ENCODE measurements at regions of chr3 and their contacts with region 1.

Region 1: DNA sequence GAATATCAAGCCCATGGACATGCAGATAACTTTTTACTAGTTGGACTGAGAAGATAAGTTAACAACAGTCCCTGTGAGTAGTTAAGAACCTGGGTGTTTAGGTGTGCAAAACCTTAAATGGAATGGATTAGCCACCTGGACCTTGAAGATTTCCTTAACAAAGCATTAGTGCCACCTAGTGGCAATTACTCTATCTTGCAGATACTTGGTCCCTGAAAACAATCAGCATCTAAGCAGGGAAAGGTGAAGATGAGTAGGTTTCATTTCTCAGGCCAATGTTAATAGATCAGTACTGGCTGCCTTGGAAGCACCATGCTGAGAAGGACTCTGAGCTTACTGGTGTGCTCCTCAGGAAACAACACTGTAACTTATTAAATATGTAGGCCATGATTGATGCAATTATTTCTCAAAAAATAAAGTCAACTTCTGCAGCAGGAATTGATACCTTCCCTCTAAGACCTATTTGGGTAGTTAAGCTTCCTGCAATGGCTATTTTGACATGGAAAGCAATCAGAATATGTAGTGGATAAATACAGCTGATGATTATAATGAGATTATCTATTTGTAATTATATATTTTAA is 329.4 kb downstream of the TBC1D5 start:
- H3K4me3 Mint-ChIP-seq: no peak overlapping the region
- H3K27ac Mint-ChIP-seq: no peak overlapping the region
- H3K4me1 Mint-ChIP-seq: no peaks in the 10 kb centered on the region
- H3K27me3 Mint-ChIP-seq: no peaks in the 10 kb centered on the region

Region 2: GRCh38 chr3:17258823-17259436 is 154.1 kb before region 1 on chr3:
- intact Hi-C with region 1: loop called (anchors 1 kb)
- H3K4me3 Mint-ChIP-seq: no peak overlapping the region
- H3K27ac Mint-ChIP-seq: no peak overlapping the region
- H3K4me1 Mint-ChIP-seq: no peaks in the 10 kb centered on the region
- H3K27me3 Mint-ChIP-seq: no peaks in the 10 kb centered on the region

Region 3: DNA sequence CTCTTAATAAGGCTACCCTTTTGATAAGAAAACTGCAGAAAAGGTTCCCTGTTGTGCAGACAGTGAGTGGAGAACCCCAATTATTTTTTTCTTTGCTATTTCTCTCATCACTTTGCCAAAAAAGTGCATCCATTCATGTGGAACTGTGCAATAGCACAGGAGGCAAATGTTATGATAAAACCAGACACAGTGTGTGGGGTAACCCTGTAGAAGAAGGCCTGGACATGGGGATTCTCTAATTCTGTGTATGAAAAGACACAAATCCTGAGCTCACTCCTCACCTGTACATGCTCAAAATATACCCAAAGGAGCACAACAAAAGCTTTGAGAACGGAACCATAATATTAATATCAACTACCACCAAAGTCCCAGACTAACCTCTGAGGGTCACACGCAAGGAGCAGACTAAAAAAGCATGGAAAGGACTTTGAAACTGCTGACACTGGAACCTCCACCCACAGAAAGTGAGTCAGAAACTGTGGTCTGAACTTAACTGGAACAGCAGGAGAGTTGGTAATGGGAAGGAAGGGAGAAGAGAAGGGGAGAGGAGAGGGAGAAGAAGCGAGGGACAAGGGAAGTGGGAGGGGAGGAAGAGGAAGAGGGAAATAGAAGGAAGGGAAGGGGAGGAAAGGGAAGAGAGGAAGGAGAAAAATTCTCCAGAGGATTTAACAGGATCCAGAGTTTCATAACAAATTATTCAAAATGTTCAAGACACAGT is 29.5 kb after region 1 on chr3:
- intact Hi-C with region 1: no loop called
- H3K4me3 Mint-ChIP-seq: no peak overlapping the region
- H3K27ac Mint-ChIP-seq: peak overlapping the region; percentile 3
- H3K4me1 Mint-ChIP-seq: peaks cover 9% of the 10 kb centered on the region
- H3K27me3 Mint-ChIP-seq: no peaks in the 10 kb centered on the region

Region 4: GRCh38 chr3:17555525-17555924 is 142.5 kb after region 1 on chr3:
- intact Hi-C with region 1: no loop called
- H3K4me3 Mint-ChIP-seq: no peak overlapping the region
- H3K27ac Mint-ChIP-seq: no peak overlapping the region
- H3K4me1 Mint-ChIP-seq: no peaks in the 10 kb centered on the region
- H3K27me3 Mint-ChIP-seq: no peaks in the 10 kb centered on the region

Measured in dendritic cell treated with granulocyte-macrophage colony-stimulating factor and Interleukin-4, amounts not matched to agents 40 ng/mL and 50 ng/mL, for 4 days (primary cell).